Colonic mucosa (tissue), 4 donors: ENCODE measurements at regions of chr3 and their contacts with region 1.

Region 1: DNA sequence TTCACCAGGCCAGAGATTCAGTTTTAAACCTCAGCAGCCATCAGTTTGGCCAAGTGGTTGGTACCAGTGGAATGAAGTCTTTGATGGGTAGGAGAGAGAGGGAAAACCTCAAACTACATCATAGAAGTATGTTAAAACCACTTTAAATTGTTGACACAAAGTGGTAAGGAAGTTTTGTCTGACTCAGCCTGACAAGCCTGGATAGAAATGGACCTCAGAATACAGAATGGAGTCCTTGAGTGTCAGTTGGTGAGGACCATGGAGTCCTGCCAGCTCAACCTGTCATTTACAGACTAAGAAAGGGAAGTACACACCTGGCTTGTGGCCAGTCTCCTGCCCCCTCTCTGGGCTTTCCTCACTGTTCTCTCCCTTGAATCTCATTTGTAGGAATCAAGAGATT is 12.1 kb downstream of the EAF1 start:
- DNase-seq: no peak
- H3K4me3 ChIP-seq: no peak overlapping the region
- H3K27ac ChIP-seq: no peak overlapping the region
- H3K4me1 ChIP-seq: no peaks in the 10 kb centered on the region
- H3K27me3 ChIP-seq: no peaks in the 10 kb centered on the region
- CTCF ChIP-seq: no peak

Region 2: DNA sequence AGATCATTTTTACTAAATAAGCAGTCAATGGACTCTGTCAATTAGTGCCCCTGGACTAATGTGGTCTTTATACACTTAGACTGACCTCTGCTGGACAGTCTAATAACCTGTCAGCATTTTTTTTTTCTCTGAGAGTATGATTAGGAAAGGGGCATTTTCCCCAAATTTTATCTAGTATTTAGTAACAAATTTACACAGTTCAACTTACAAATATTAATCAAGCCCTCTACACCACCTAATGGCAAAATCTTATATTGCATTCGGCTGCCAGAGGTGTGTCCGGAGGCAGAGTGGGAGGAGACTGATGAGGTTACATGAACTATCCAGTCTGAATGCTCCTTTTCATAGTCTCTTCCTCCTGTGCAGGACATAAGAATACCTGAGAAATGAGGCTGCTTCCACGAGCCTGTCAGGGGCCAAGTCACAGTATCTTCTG is 118.1 kb after region 1 on chr3:
- intact Hi-C with region 1: loop called (anchors 10 kb)
- DNase-seq: peak; percentile 72
- H3K4me3 ChIP-seq: no peak overlapping the region
- H3K27ac ChIP-seq: no peak overlapping the region
- H3K4me1 ChIP-seq: peaks cover 3% of the 10 kb centered on the region
- H3K27me3 ChIP-seq: no peaks in the 10 kb centered on the region
- CTCF ChIP-seq: peak; percentile 76